Activated CD4-positive, alpha-beta T cell treated with anti-CD3 and anti-CD28 coated beads for 36 hours (primary cell): ENCODE measurements at regions of chrX and their contacts with region 1.

Region 1: DNA sequence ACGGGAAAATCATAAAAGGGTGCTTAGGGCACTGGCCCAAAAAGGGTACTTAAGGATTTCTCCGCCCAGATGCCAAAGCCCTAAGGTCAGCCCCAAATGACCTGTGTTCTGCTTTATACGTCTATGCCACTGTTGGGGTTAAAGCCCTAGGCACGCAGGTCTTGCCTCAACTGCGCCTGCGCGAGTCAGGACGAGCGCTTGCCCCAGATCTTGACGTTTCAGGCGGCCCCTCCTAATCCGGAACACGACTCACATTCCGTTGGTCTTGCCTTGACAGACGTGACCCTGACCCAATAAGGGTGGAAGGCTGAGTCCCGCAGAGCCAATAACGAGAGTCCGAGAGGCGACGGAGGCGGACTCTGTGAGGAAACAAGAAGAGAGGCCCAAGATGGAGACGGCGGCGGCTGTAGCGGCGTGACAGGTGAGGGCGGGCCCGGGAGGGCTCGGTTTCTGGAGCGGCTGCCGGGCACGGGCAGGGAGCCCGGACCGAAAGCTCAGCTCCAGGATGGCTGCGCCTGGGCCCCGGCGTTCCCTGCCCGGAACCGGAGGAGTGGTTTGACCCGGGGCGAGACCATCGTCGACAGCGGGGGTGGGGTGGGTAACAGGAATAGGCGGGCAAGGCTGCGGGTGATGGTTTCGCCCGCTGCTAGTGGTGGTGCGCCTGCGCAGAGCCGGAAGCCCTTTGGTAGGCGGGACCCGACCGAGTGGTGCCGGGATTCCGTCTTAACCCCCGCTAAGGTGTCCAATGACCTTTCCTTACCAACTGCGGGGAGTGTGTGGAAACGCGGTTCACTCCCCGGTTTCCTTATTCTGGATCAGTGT is at the start of gene ARAF:
- DNase-seq: peak; percentile 96
- ATAC-seq: peak; percentile 91
- H3K4me3 Mint-ChIP-seq: peak within 1 kb of the TSS; percentile 89
- H3K27ac Mint-ChIP-seq: peak within 1 kb of the TSS; percentile 94
- H3K4me1 Mint-ChIP-seq: peaks cover 37% of the 10 kb centered on the region
- H3K27me3 Mint-ChIP-seq: no peaks in the 10 kb centered on the region
- total RNA-seq, gene ARAF: 58.8 to 59.2 TPM

Region 2: DNA sequence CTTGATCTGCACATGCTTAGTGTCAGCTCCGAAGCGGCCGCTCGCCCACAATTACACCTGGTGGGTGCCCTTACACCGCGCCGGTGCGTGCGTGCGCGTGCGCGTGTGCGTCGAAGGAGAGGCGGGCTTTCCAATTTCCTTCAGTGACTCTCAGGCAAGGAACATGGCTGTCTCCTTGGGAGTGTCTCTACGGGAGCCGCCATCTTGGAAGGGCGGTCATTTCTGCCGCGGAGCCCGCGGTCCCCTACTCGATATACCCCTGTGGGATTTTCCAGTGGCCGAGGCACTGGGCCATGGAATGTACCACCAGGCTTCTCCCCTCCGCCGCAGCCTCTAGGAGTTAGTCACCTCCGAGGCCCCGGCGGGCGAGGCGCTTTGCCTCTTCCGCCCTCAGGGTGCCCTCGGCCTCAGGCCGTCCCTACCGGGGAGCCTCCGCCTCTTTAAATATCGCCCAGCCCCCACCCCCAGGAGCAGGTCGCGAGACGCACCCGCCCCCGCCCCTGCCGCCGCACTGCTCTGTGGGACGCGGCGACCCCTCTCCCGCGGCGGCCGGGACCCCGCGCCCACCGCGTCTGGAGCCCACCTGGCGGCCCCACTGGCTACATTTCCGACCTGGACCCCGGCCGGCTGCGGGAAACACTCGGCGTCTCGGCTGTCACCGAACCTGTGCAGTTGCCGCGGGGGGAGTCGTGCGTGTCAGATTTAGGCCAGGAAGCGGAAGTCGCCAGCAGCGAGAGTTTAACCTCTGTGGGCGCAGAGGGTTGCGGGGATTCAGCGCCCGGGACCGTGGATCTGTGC is 78.3 kb before region 1 on chrX and contains the start of gene ZNF41:
- CTCF ChIA-PET with region 1: no interaction called
- POLR2A ChIA-PET with region 1: no interaction called
- intact Hi-C with region 1: loop called in 1 of 2 experiments (anchors 1 kb)
- DNase-seq: peak; percentile 86
- ATAC-seq: peak; percentile 90
- H3K4me3 Mint-ChIP-seq: peak within 1 kb of the TSS; percentile 97
- H3K27ac Mint-ChIP-seq: peak within 1 kb of the TSS; percentile 94
- H3K4me1 Mint-ChIP-seq: peaks cover 41% of the 10 kb centered on the region
- H3K27me3 Mint-ChIP-seq: no peaks in the 10 kb centered on the region
- total RNA-seq, gene ZNF41: 9.3 to 10.9 TPM

Region 3: DNA sequence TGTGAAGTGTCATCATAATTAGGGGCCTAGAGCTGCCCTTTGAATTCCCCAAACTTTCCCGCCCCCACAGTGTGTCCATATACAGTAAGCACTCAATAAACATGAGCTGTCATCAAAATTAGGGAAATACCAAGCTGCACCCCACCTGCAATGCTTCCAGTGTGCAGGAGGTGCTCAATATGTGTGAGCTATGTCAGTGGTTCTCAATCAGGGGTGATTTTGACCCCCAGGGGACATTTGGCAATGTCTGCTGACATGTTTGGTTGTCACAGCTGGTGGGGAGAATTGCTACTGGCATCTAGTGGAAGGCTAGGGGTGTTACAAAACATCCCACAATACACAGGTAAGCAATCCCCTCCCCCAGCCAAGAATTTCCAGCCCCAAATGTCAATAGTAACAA is 67.9 kb after region 1 on chrX:
- CTCF ChIA-PET with region 1: no interaction called
- POLR2A ChIA-PET with region 1: no interaction called
- intact Hi-C with region 1: loop called in 1 of 2 experiments (anchors 5 kb)
- DNase-seq: peak; percentile 35
- ATAC-seq: peak; percentile 33
- H3K4me3 Mint-ChIP-seq: peak overlapping the region; percentile 54
- H3K27ac Mint-ChIP-seq: peak overlapping the region; percentile 82
- H3K4me1 Mint-ChIP-seq: peaks cover 23% of the 10 kb centered on the region
- H3K27me3 Mint-ChIP-seq: no peaks in the 10 kb centered on the region

Region 4: GRCh38 chrX:47723689-47724088 is 162.6 kb after region 1 on chrX:
- CTCF ChIA-PET with region 1: no interaction called
- POLR2A ChIA-PET with region 1: no interaction called
- intact Hi-C with region 1: loop called in 1 of 2 experiments (anchors 1 kb)
- DNase-seq: peak; percentile 56
- ATAC-seq: peak; percentile 51
- H3K4me3 Mint-ChIP-seq: no peak overlapping the region
- H3K27ac Mint-ChIP-seq: no peak overlapping the region
- H3K4me1 Mint-ChIP-seq: no peaks in the 10 kb centered on the region
- H3K27me3 Mint-ChIP-seq: peaks cover 4% of the 10 kb centered on the region

Region 5: GRCh38 chrX:48021026-48021900 is 460.2 kb after region 1 on chrX:
- CTCF ChIA-PET with region 1: no interaction called
- POLR2A ChIA-PET with region 1: no interaction called
- intact Hi-C with region 1: loop called in 1 of 2 experiments (anchors 2 kb)
- DNase-seq: peak; percentile 84
- ATAC-seq: peak; percentile 57
- H3K4me3 Mint-ChIP-seq: peak overlapping the region; percentile 85
- H3K27ac Mint-ChIP-seq: peak overlapping the region; percentile 99
- H3K4me1 Mint-ChIP-seq: peaks cover 14% of the 10 kb centered on the region
- H3K27me3 Mint-ChIP-seq: no peaks in the 10 kb centered on the region